ENCODE measurements at regions of chr7 and their contacts with region 1.

Region 1: DNA sequence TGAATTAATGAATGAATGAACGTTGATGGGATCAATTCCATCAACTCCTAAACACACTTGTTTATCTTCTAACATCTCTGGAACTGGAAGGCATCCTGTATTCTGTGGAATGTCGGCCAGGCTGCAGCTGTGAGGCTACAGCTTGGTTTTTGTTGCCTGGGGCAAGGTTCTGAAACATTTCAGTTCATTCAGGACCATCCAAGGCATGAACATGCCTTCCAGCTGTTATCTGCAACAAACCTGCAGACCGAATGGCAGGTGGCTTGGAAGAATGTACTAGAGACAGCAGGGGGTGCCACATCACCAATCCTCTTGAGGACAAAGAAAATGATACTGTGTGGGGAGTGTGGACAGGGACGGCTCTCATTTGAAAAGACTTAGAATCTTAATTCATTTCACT is 12.5 kb downstream of the PAPOLB start:
- DNase-seq: peak; percentile 50
- ATAC-seq: peak; percentile 60
- H3K4me3 Mint-ChIP-seq: no peak overlapping the region
- H3K27ac Mint-ChIP-seq: no peak overlapping the region
- H3K4me1 Mint-ChIP-seq: peaks cover 8% of the 10 kb centered on the region
- H3K27me3 Mint-ChIP-seq: peaks cover 14% of the 10 kb centered on the region

Region 2: DNA sequence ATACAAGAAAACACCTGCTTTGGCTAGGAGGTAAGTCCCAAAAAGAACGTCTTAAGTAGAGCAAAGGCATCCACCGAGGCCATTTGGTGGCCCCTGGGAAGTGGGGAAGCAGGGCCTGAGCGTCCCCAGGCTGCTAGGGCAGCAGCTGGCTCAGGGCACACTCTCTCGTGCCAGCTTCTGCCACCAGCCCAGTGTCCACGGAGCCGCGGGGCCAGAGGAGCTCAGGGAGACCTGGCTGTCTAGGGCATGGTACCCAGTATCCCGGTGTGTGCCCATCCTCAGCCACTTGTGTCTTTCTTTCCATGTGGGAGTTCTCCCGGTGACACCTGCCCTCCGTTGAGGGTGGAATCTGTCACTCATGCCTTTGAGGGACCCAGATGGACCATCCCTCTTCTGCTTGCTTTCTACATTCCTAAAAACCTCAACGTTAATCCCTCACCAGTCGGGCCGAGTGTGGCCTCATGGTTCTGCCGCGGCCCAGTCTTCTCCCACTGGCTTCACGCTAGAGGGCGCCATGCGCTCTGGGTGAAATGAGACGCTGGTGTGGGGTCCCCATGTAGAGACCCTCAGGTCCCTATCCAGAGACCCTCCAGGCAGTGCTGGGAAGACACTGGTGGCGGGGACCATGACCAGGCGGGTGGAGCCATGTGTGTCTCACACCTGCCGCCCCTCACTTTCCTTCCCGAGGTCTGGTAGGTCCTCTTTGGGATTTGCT is 83.4 kb before region 1 on chr7:
- CTCF ChIA-PET with region 1: no interaction called
- DNase-seq: no peak
- ATAC-seq: no peak
- H3K4me3 Mint-ChIP-seq: no peak overlapping the region
- H3K27ac Mint-ChIP-seq: no peak overlapping the region
- H3K4me1 Mint-ChIP-seq: no peaks in the 10 kb centered on the region
- H3K27me3 Mint-ChIP-seq: no peaks in the 10 kb centered on the region

Region 3: DNA sequence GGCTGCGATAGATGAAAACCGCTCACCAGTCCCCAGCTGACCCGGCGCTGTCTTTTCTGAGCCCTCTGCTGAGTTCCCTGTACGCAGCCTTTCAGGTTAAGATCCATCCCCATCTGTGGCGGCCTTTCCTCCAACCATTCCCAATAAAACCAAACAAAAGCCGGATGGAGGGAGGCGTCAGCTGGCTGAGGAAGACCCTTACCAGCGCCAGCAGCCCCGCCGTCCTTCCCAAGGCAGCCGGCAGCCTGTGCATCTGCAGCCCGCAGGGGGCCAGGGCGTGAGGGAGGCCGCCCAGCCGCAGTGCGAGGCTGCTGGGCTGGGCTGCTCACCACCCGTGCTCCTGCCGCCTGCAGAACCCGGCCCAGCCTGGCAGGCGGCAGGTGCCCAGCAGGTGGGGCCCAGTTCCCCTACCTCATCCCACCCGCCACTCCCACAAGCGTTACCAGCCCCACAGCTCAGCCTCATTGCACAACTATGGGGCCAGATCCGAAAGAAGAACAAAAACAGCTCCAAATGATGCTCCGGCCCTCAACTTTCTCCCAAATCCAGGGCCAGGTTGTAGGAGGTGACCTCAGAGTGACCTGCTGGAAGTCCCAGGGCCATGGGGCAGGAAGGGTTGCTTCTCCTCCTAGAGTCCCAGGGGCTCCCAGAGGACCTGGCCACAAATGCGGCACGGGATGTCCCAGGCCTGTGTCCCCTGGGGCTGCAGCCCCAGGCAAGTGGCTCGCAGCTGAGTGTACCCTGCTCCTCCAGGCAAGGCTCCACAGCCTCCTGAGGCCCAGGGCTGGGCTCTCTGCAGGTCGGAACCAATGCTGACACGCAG is 11.4 kb before region 1 on chr7:
- CTCF ChIA-PET with region 1: no interaction called
- DNase-seq: no peak
- ATAC-seq: no peak
- H3K4me3 Mint-ChIP-seq: no peak overlapping the region
- H3K27ac Mint-ChIP-seq: no peak overlapping the region
- H3K4me1 Mint-ChIP-seq: no peaks in the 10 kb centered on the region
- H3K27me3 Mint-ChIP-seq: no peaks in the 10 kb centered on the region

Region 4: GRCh38 chr7:5088906-5089305 is 239.5 kb after region 1 on chr7:
- CTCF ChIA-PET with region 1: interaction called, 13 read pairs
- DNase-seq: no peak
- ATAC-seq: no peak
- H3K4me3 Mint-ChIP-seq: no peak overlapping the region
- H3K27ac Mint-ChIP-seq: no peak overlapping the region
- H3K4me1 Mint-ChIP-seq: peaks cover 2% of the 10 kb centered on the region
- H3K27me3 Mint-ChIP-seq: no peaks in the 10 kb centered on the region

Measured in activated CD8-positive, alpha-beta memory T cell treated with anti-CD3 and anti-CD28 coated beads, Interleukin-2, amount 10 ng/mL, durations not matched to agents 7 days and 5 days (primary cell).